Common myeloid progenitor, CD34-positive (primary cell): ENCODE measurements at regions of chr10 and their contacts with region 1.

Region 1: GRCh38 chr10:101018600-101019439 is 12.1 kb downstream of the PDZD7 start:
- DNase-seq: peak; percentile 72 to 73 (median 73)
- H3K4me3 ChIP-seq: peak overlapping the region in 3 of 7 experiments; percentile 7 to 48 (median 19)
- H3K27ac ChIP-seq: no peak overlapping the region
- H3K4me1 ChIP-seq: peaks cover 0 to 23% (median 17%) of the 10 kb centered on the region in 4 experiments
- H3K27me3 ChIP-seq: peaks cover 0 to 29% (median 3%) of the 10 kb centered on the region in 5 experiments

Region 2: GRCh38 chr10:100969187-100970075 is 49.4 kb before region 1 on chr10 and contains the start of gene SEMA4G:
- CTCF ChIA-PET with region 1: interaction called, 82 read pairs
- POLR2A ChIA-PET with region 1: no interaction called
- DNase-seq: peak; percentile 52 to 70 (median 62)
- H3K4me3 ChIP-seq: peak within 1 kb of the TSS; percentile 23 to 79 (median 54)
- H3K27ac ChIP-seq: no peak within 1 kb of the TSS
- H3K4me1 ChIP-seq: peaks cover 0 to 19% (median 13%) of the 10 kb centered on the region in 4 experiments
- H3K27me3 ChIP-seq: peaks cover 0 to 4% (median 2%) of the 10 kb centered on the region in 5 experiments

Region 3: GRCh38 chr10:100998991-100999741 is 19.7 kb before region 1 on chr10:
- CTCF ChIA-PET with region 1: interaction called, 311 read pairs
- POLR2A ChIA-PET with region 1: no interaction called
- DNase-seq: peak; percentile 70 to 81 (median 81)
- H3K4me3 ChIP-seq: peak overlapping the region; percentile 76 to 93 (median 84)
- H3K27ac ChIP-seq: peak overlapping the region; percentile 79 to 90
- H3K4me1 ChIP-seq: peaks cover 0 to 60% (median 50%) of the 10 kb centered on the region in 4 experiments
- H3K27me3 ChIP-seq: no peaks in the 10 kb centered on the region

Region 4: GRCh38 chr10:101031128-101031795 is 12.4 kb after region 1 on chr10 and contains the starts of genes PDZD7 and SFXN3:
- CTCF ChIA-PET with region 1: interaction called, 166 read pairs
- POLR2A ChIA-PET with region 1: interaction called, 4 read pairs
- DNase-seq: peak; percentile 90 to 94 (median 91)
- H3K4me3 ChIP-seq: peak within 1 kb of the TSS; percentile 45 to 92 (median 80)
- H3K27ac ChIP-seq: peak within 1 kb of the TSS; percentile 84 to 93
- H3K4me1 ChIP-seq: peaks cover 2 to 45% (median 37%) of the 10 kb centered on the region in 4 experiments
- H3K27me3 ChIP-seq: peaks cover 0 to 16% (median 9%) of the 10 kb centered on the region in 5 experiments

Region 5: DNA sequence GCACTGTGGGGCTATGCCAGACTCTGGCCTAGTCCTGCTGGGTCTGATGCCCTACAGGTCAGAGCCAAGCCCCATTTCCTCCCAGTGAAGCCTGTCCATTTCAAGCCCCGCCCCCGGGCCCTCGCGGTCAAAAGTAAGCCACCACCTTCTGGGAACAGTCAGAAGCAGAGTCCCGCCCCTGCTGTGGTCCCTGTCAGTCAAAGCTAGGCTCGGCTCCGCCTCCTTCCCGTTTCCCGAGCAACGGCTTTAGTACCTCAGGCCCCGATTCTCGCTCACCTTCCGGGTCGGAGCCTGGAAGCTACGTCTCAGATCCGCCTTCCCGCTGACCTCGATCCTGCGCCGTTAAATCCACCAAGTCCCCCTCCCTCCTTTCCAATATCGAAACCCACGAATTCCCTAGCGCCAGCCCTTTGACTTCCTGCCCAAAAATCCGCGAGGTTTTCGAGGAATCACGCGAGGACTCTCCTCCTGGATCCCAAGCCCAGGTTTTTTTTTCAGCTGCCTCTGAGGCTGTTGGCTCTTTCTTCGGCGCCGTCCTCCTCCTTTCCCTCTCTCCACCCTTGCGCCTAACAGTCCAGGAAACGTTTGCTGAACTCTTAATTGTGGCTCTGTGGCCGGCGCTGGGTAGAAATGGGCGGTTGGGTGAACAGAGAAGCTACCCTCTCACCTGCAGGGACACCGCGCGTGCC is 24.0 kb after region 1 on chr10:
- CTCF ChIA-PET with region 1: interaction called, 1,574 read pairs
- POLR2A ChIA-PET with region 1: no interaction called
- DNase-seq: peak; percentile 87 to 90 (median 89)
- H3K4me3 ChIP-seq: peak overlapping the region; percentile 50 to 91 (median 80)
- H3K27ac ChIP-seq: peak overlapping the region; percentile 51 to 81
- H3K4me1 ChIP-seq: peaks cover 0 to 27% (median 19%) of the 10 kb centered on the region in 4 experiments
- H3K27me3 ChIP-seq: peaks cover 2 to 21% (median 13%) of the 10 kb centered on the region in 5 experiments

Region 6: DNA sequence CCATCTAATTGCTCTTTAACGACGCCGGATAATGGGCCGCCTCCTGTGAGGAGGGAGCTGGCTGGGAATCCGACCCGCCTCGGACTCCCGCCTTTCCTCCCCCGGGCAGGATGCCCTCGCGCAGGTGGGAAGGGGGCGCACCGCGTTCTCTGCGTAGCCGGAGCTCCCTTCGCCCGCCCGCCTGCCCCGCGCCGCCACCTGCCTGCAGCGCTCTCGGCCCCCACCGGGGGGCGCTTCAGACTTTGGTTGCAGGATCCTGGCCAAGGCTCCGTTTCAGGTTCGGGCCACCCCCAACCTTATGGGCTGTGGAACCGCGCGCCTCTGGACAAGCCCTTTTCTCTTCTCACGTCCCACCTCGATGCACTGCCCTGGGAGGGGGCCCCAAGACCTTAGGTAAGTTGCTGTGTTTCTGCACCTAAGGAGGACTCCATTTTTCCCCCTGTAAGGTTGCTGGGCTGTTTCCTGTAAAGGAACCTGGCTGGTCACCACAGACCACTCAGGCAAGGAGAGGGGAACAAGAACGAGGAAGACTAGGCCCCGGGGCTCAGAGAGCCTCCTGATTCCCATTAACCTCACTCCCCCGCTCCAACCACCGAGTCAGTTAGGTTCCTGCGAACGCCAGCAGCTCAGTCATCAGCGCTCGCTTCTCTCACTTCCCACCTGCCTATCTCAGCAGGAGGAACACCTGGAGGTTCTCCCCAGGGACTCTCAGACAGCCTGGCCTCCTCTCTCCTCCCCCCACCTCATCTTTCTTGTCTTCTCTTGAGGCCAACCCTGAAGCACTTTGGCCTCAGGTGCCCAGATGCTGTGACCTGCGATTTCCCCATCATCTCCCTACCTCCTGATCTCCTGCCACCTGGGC is 31.6 kb after region 1 on chr10:
- CTCF ChIA-PET with region 1: interaction called, 1,574 read pairs
- POLR2A ChIA-PET with region 1: interaction called, 3 read pairs
- DNase-seq: peak; percentile 56 to 73 (median 70)
- H3K4me3 ChIP-seq: peak overlapping the region in 5 of 7 experiments; percentile 3 to 53 (median 17)
- H3K27ac ChIP-seq: no peak overlapping the region
- H3K4me1 ChIP-seq: peaks cover 5 to 38% (median 29%) of the 10 kb centered on the region in 4 experiments
- H3K27me3 ChIP-seq: peaks cover 8 to 56% (median 24%) of the 10 kb centered on the region in 5 experiments

Region 7: GRCh38 chr10:101182936-101183335 is 164.1 kb after region 1 on chr10:
- CTCF ChIA-PET with region 1: no interaction called
- POLR2A ChIA-PET with region 1: no interaction called
- DNase-seq: no peak
- H3K4me3 ChIP-seq: no peak overlapping the region
- H3K27ac ChIP-seq: no peak overlapping the region
- H3K4me1 ChIP-seq: no peaks in the 10 kb centered on the region
- H3K27me3 ChIP-seq: peaks cover 2 to 36% (median 9%) of the 10 kb centered on the region in 5 experiments